ENCODE measurements at regions of chr18 and their contacts with region 1.

Region 1: DNA sequence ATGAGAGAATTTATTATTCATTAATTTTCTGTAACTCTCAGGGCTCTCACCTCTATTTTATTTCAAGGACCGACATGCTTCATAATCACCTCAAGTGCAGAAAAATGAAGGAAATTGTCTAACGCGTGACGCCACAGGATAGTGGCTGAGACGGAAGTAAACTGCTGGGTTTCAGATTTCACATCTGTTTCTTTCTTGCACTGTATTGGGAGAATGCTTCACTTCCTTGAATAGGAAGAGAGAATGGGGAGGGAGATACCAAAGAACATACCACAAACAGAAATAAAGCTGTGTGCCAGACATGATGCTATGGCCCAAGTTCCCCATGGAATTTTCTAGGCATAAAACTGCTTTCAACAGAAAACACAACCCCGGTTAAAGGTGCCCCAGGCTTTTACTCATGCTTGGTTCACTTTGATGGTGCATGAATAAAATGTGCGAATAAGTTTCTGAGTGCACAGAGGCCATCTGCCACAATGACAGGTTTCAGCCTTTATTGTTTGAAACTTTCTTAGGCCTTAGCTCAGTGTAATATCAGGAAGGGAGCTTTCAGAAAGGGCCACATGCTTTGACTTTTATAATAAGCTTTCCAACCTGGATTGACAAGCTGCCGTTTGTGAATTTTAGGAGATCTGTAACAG is 1116.4 kb downstream of the SOCS6 start:
- DNase-seq: no peak
- H3K4me3 Mint-ChIP-seq: no peak overlapping the region
- H3K27ac Mint-ChIP-seq: no peak overlapping the region
- H3K4me1 Mint-ChIP-seq: no peaks in the 10 kb centered on the region
- H3K27me3 Mint-ChIP-seq: no peaks in the 10 kb centered on the region
- CTCF ChIP-seq: no peak

Region 2: GRCh38 chr18:71362143-71362542 is 43.1 kb before region 1 on chr18:
- CTCF ChIA-PET with region 1: no interaction called
- intact Hi-C with region 1: loop called (anchors 1 kb)
- DNase-seq: no peak
- H3K4me3 Mint-ChIP-seq: no peak overlapping the region
- H3K27ac Mint-ChIP-seq: no peak overlapping the region
- H3K4me1 Mint-ChIP-seq: no peaks in the 10 kb centered on the region
- H3K27me3 Mint-ChIP-seq: no peaks in the 10 kb centered on the region
- CTCF ChIP-seq: no peak